HEK293T (cell line): ENCODE measurements at regions of chr2 and their contacts with region 1.

Region 1: GRCh38 chr2:47534179-47534919 is 131.4 kb downstream of the MSH2 start:
- DNase-seq: peak; percentile 25

Region 2: DNA sequence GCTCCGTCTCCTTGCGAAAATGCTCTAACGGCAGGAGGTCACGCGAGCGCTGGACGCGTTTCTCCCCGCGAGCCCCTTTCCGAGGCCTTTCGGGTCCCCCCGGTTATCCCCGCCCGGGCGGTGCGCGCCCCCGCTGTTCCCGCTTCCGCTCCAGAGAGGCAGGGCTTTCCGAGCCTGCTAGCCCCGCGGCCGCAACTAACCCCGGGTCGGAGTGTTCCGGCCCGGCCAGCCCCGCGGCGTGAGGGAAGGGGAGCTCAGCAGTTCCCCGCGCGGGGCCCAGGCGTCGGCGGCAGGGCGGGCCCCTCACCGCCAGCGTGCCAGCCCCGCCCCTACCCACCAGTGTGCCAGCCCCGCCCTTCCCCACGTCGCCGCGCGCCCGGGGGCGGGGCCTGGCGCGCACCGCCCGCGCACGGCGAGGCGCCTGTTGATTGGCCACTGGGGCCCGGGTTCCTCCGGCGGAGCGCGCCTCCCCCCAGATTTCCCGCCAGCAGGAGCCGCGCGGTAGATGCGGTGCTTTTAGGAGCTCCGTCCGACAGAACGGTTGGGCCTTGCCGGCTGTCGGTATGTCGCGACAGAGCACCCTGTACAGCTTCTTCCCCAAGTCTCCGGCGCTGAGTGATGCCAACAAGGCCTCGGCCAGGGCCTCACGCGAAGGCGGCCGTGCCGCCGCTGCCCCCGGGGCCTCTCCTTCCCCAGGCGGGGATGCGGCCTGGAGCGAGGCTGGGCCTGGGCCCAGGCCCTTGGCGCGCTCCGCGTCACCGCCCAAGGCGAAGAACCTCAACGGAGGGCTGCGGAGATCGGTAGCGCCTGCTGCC is 248.5 kb after region 1 on chr2 and contains the start of gene MSH6:
- CTCF ChIA-PET with region 1: no interaction called
- POLR2A ChIA-PET with region 1: interaction called, 10 read pairs
- DNase-seq: peak; percentile 94